ENCODE measurements at regions of chr5 and their contacts with region 1.

Region 1: GRCh38 chr5:160133071-160133917 is 14.0 kb upstream of the PWWP2A start:
- DNase-seq: peak; percentile 91

Region 2: DNA sequence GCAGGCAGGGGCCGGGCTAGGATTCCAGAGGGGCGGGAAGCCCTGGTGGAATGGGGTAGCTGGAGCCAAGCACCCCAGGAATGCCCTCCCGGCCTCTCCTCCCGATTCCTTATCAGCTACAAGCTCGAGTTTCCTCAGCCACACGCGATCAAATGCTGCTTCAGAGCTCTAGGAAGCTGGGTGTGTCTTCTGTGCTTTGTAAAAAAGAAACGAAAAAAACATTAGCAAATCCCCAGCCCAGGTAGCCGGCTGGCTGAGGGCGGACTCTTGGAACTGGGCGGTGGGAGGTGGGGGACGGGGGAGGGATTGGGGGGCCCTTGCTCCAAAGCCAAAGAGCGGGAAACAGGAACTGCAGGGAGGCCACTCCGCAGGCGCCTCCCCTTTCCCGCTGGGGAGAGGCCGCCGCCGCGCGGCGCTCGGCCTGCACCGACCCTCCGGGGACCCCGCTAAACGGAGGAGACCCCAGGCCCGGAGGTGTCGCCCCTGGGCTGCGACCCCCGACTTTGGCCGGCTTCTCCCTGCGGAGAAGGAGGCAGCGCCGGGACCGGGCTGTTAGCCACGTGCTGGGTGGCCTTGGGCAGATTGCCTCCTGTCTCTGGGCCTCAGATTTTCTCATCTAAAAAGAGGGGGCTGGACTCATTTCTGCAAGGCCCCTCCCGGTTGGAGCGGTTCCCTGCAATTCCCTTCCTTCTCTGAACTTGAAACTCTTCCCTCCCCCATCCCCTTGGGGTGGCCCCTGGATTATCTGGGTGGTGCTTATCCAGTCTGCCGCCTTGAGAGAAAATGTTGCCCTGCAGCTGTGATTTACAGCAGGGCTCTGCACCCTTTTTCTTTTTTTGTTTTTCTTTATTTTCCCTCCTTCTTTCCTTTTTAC is 55.1 kb after region 1 on chr5:
- intact Hi-C with region 1: loop called in 1 of 2 experiments (anchors 10 kb)
- DNase-seq: peak; percentile 83

Region 3: GRCh38 chr5:160486573-160486972 is 353.3 kb after region 1 on chr5:
- intact Hi-C with region 1: loop called in 1 of 2 experiments (anchors 5 kb)
- DNase-seq: no peak

Measured in posterior vena cava (tissue), 2 donors.